Lower leg skin (tissue), 4 donors: ENCODE measurements at regions of chr10 and their contacts with region 1.

Region 1: DNA sequence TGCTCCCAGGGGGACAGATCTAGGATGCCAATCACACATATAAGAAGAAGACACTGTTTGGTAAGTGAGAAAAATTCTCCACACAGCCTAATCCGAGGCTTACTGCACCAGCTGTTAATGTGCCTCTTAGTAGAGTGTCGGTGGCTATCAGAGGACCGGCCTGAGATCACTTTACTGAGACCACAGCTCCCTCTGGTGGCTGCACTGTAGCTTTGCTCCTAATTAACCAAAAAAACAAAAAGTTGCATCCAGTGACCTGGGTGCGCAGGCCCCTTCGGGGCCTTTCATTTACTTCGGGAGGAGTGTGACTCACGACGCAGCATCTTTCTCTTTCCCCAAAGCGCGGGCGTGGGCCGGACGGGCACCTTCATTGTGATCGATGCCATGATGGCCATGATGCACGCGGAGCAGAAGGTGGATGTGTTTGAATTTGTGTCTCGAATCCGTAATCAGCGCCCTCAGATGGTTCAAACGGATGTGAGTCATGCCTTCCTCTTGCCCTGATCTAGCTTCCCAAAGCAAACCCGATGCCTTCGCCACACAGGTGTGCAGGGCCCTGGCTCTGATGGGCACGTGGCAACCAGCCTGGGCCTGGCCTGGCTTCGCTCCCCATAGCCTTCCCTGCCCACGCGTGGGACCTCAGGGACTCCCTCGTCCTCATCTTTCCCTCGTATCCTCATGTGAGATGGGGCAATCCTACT is 56.7 kb downstream of the MKI67 start:
- DNase-seq: peak in 1 of 2 donors; percentile 92
- H3K4me3 ChIP-seq: no peak overlapping the region
- CTCF ChIP-seq: peak in 1 of 3 donors; percentile 73
- POLR2A ChIP-seq: no peak

Region 2: DNA sequence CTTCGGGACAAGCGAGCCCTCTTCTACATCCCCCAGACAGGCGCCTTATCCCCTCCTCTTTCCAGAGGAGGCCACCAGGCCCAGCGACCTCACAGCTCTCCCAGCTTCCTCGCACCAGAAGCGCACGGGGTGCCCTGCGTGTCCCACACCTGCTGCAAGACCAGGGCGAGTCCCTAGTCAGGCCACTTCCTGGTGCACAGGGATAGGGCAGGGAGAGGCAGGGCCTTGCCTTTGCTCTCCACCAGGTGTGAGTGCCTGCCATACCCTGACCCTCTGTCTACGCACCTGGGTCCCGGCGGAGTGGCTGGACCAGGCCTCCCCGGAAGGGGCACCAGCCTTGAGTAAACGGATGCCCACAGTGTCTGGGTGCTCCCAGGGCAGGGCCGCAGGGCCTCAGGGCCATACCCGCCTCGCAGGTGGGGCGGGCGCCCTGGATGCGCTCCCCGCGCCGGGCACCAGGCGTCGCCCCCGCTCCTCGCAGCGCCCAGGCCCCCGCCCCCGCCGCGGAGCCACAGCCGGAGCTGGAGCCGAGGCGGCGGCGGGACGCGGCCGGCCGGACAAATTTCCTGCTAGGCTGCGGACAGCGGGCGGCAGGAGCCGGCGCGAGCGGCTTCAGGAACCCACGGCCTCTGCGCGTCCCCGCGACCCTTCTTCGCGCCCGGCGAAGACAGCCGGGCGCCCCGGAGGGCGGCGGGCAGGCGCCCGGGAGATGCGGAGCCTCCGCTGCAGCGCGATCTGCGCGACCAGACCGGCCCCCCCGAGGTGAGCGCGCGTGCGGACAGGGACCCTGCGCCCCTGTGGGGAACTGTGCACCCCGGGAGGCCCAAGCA is 162.7 kb before region 1 on chr10 and contains the start of gene PTPRE:
- intact Hi-C with region 1: loop called (anchors 10 kb)
- DNase-seq: peak in 1 of 2 donors; percentile 90
- H3K4me3 ChIP-seq: peak within 1 kb of the TSS; percentile 38
- CTCF ChIP-seq: no peak
- POLR2A ChIP-seq: no peak
- total RNA-seq, gene PTPRE: 17.4 to 23.0 (median 20.1) TPM

Region 3: DNA sequence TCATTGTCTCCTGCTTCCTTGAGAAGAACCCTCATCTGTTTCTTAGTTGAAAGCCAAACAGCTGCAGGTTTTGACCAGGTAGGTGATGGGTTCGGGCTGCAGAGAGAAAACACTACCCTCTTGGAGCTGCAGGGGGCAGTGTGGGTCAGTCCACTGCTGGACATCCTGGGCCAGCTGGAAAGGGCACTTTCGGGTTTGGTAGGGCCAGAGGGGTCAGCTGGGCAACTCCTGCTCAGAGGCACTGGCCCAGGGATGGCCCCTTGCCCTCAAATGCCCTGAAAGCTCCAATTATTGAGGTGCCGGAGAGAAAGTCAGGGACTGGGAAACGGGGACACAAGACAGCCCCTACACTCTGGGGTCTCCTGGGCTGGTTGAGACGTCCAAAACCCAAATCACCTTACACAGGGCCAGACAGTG is 33.9 kb before region 1 on chr10:
- intact Hi-C with region 1: loop called (anchors 2 kb)
- DNase-seq: peak; percentile 41 to 90
- H3K4me3 ChIP-seq: no peak overlapping the region
- CTCF ChIP-seq: peak in 1 of 3 donors; percentile 60
- POLR2A ChIP-seq: no peak

Region 4: GRCh38 chr10:128150045-128150493 is 80.6 kb after region 1 on chr10:
- intact Hi-C with region 1: loop called (anchors 10 kb)
- DNase-seq: peak in 1 of 2 donors; percentile 89
- H3K4me3 ChIP-seq: no peak overlapping the region
- CTCF ChIP-seq: no peak
- POLR2A ChIP-seq: no peak